ENCODE measurements at regions of chr2 and their contacts with region 1.

Region 1: DNA sequence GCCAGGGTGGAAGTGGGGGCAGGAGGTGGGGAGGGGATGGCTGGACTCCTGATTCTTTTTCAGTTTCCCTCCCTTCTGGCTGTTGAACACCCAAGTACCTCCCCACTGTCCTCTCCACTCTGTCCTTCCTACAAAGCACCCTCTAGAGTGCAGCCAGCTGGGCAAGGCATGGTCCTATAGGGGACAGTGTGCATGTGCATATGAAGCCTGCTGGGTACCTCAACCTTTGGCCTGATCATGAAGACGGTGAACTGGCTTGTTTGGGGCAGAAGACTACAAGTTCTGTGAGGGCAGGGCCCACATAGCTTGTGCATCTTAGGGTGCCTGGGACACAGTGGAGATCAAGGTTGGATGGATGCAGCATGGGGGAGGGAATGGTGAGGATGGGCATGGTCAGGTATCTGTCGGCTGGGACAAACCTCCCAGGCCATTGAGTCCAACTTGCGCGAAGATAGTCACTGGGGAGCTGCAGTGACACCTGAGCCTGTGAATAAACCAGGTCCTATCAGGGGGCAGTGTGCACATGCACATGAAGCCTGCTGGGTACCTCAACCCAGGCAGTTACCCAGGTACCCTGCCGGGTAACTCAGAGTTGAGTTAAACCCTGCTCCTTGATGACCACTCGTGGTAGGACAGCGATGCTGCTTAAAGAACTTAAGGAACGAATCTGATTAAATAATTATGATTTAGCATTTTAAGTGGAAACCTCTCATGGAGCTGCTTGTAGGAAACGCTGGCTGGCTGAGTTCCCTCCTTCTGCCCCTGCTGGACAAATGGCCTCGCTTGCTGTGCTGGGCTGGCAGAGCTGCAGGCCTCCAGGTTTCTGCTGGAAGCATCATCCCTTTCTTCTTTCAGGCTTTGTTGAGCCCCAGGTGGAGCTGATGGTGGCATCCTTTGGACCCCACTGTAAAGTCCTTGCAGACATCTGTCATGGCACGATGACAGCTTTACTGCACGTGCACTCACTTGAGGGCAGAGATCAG is 84.0 kb downstream of the POLR1A start:
- DNase-seq: no peak
- ATAC-seq: peak; percentile 46
- H3K4me3 ChIP-seq: no peak overlapping the region
- H3K27ac ChIP-seq: no peak overlapping the region
- H3K4me1 ChIP-seq: peaks cover 14% of the 10 kb centered on the region
- H3K27me3 ChIP-seq: peaks cover 0 to 10% of the 10 kb centered on the region in 2 experiments; a peak in 2 of 5 replicates
- CTCF ChIP-seq: no peak
- EP300 ChIP-seq: no peak
- POLR2A ChIP-seq: no peak; a peak in 1 of 4 replicates
- RAD21 ChIP-seq: no peak

Region 2: GRCh38 chr2:85888684-85889626 is 132.7 kb before region 1 on chr2 and contains the start of gene ST3GAL5:
- CTCF ChIA-PET with region 1: no interaction called
- POLR2A ChIA-PET with region 1: no interaction called
- in situ Hi-C with region 1: no loop called
- intact Hi-C with region 1: loop called (anchors 2 kb)
- DNase-seq: peak; percentile 73
- ATAC-seq: peak; percentile 92
- H3K4me3 ChIP-seq: peak within 1 kb of the TSS; percentile 58 to 80 (median 69)
- H3K27ac ChIP-seq: no peak within 1 kb of the TSS
- H3K4me1 ChIP-seq: peaks cover 25% of the 10 kb centered on the region
- H3K27me3 ChIP-seq: peaks cover 4 to 31% of the 10 kb centered on the region in 2 experiments
- CTCF ChIP-seq: peak; percentile 81
- EP300 ChIP-seq: no peak
- POLR2A ChIP-seq: no peak
- RAD21 ChIP-seq: peak; percentile 76
- total RNA-seq, gene ST3GAL5: 1.3 TPM in 2 replicates

Measured in HepG2 (cell line).